CD4-positive, alpha-beta T cell (primary cell): ENCODE measurements at regions of chr2 and their contacts with region 1.

Region 1: DNA sequence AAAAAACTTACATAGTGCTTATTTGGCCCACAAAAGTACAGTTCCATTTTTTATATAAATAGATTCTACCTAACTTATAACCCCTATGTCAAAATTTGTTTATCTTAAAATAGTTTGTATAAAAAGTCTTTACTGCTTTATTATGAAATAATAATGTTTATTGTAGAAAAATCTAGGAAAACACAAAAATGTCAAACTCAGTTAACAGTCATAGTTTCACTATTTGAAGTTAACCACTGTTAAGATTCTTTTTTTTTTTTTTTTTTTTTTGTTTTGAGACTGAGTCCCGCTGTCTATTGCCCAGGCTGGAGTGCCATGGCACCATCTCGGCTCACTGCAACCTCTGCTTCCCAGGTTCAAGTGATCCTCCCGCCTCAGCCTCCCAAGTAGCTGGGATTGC is 26.5 kb upstream of the ABI2 start:
- DNase-seq: no peak
- ATAC-seq: no peak
- H3K4me3 ChIP-seq: no peak overlapping the region
- H3K4me3 Mint-ChIP-seq: no peak overlapping the region
- H3K27ac ChIP-seq: no peak overlapping the region
- H3K27ac Mint-ChIP-seq: no peak overlapping the region
- H3K4me1 ChIP-seq: no peaks in the 10 kb centered on the region
- H3K4me1 Mint-ChIP-seq: no peaks in the 10 kb centered on the region
- H3K27me3 ChIP-seq: no peaks in the 10 kb centered on the region
- H3K27me3 Mint-ChIP-seq: no peaks in the 10 kb centered on the region
- CTCF ChIP-seq: no peak

Region 2: DNA sequence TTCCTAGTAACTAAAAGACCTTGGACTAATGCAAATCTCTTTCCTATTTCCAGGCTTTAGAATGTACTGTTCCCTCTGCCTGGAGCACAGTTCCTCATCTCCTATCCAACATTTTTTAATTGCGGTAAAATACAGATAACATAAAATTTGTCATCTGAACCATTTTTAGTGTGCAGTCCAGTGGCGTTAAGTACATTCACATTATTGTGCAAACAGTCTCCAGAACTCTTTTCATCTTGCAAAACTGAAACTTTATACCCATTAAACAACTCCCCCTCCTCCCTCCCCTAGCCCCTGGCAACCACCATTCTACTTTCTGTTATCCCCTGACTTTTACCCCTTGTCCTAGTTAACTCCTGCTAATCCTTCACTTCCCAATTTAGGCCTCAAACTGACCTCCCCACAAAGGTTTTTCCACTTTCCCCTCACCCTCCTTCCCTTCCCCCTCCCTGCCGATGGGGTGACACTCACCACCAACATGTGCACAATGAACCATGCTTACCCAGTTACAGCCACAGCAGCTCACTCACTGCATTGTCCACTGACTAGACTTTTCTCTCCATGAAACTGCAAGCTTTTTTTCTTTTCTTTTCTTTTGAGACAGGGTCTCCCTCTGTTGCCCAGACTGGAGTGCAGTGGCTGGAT is 1173.9 kb before region 1 on chr2:
- CTCF ChIA-PET with region 1: no interaction called
- POLR2A ChIA-PET with region 1: no interaction called
- intact Hi-C with region 1: loop called in 1 of 2 experiments (anchors 5 kb)
- DNase-seq: no peak
- ATAC-seq: no peak
- H3K4me3 ChIP-seq: no peak overlapping the region
- H3K4me3 Mint-ChIP-seq: no peak overlapping the region
- H3K27ac ChIP-seq: no peak overlapping the region
- H3K27ac Mint-ChIP-seq: no peak overlapping the region
- H3K4me1 ChIP-seq: no peaks in the 10 kb centered on the region
- H3K4me1 Mint-ChIP-seq: no peaks in the 10 kb centered on the region
- H3K27me3 ChIP-seq: no peaks in the 10 kb centered on the region
- H3K27me3 Mint-ChIP-seq: no peaks in the 10 kb centered on the region
- CTCF ChIP-seq: no peak

Region 3: DNA sequence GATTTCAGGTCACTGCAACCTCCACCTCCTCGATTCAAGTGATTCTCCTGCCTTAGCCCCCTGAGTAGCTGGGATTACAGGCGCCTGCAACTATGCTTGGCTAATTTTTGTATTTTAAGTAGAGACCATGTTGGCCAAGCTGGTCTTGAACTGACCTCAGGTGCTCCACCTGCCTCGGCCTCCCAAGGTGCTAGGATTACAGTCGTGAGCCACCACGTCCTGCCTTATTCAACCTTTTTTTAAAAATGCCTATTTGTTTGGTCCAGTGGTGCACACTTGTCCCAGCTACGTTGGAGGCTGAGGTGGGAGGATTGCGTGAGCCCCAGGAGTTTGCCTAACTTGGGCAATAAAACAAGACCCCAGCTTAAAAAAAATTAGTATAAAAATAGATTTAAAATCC is 19.6 kb before region 1 on chr2:
- CTCF ChIA-PET with region 1: no interaction called
- POLR2A ChIA-PET with region 1: no interaction called
- intact Hi-C with region 1: no loop called
- DNase-seq: no peak
- ATAC-seq: no peak
- H3K4me3 ChIP-seq: no peak overlapping the region
- H3K4me3 Mint-ChIP-seq: no peak overlapping the region
- H3K27ac ChIP-seq: no peak overlapping the region
- H3K27ac Mint-ChIP-seq: no peak overlapping the region
- H3K4me1 ChIP-seq: no peaks in the 10 kb centered on the region
- H3K4me1 Mint-ChIP-seq: no peaks in the 10 kb centered on the region
- H3K27me3 ChIP-seq: no peaks in the 10 kb centered on the region
- H3K27me3 Mint-ChIP-seq: no peaks in the 10 kb centered on the region
- CTCF ChIP-seq: no peak